ENCODE measurements at regions of chr2 and their contacts with region 1.

Region 1: DNA sequence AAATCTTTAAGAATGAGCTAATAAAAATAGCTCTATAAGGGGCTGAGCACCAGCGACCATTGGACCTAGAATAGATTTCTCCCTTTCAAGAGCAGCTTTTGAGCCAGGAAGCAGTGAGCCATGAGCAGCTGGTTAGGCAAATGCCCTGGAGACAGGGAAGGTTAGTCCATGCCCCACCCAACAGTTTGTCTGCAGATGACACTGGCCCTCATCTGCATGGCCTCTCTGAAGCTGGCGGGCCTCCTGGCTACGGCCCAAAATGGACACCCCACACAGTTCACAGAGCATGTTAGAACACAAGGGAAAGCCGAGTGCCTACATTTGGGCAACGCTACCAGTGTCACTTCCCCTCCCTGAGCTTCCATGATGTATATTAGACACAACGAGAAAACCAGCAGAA is 201.1 kb downstream of the MGAT5 start:
- DNase-seq: no peak
- H3K4me3 Mint-ChIP-seq: no peak overlapping the region
- H3K27ac Mint-ChIP-seq: no peak overlapping the region
- H3K4me1 Mint-ChIP-seq: no peaks in the 10 kb centered on the region
- H3K27me3 Mint-ChIP-seq: no peaks in the 10 kb centered on the region

Region 2: DNA sequence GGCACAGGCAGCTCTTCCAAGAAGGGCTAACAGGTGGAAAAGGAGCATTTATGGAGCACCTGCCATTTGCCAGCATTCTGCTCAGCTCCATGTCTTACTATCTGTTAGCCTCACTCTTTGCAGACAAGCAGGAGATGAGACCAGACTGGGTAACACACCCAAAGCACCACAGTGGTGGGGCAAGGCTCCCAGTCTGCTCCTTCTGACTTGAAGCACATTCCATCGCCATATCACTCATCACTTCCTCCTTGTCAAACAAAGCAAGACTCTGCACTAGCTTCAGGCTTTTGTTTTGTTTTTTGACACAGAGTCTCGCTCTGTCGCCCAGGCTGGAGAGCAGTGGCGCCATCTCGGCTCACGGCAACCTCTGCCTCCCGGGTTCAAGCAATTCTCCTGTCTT is 18.2 kb before region 1 on chr2:
- CTCF ChIA-PET with region 1: interaction called, 19 read pairs
- intact Hi-C with region 1: no loop called
- DNase-seq: no peak
- H3K4me3 Mint-ChIP-seq: no peak overlapping the region
- H3K27ac Mint-ChIP-seq: no peak overlapping the region
- H3K4me1 Mint-ChIP-seq: no peaks in the 10 kb centered on the region
- H3K27me3 Mint-ChIP-seq: no peaks in the 10 kb centered on the region

Region 3: GRCh38 chr2:134706587-134707329 is 251.8 kb after region 1 on chr2:
- CTCF ChIA-PET with region 1: interaction called, 3 read pairs
- intact Hi-C with region 1: loop called (anchors 5 kb)
- DNase-seq: no peak
- H3K4me3 Mint-ChIP-seq: peak overlapping the region; percentile 14
- H3K27ac Mint-ChIP-seq: no peak overlapping the region
- H3K4me1 Mint-ChIP-seq: peaks cover 16% of the 10 kb centered on the region
- H3K27me3 Mint-ChIP-seq: peaks cover 64% of the 10 kb centered on the region

Measured in activated naive CD4-positive, alpha-beta T cell treated with anti-CD3 and anti-CD28 coated beads for 36 hours (primary cell).